B cell (primary cell): ENCODE measurements at regions of chr1 and their contacts with region 1.

Region 1: GRCh38 chr1:107897438-107898345 is 67.3 kb downstream of the VAV3 start:
- DNase-seq: peak; percentile 86
- ATAC-seq: peak; percentile 81
- H3K4me3 ChIP-seq: peak overlapping the region in 3 of 5 experiments; percentile 12 to 16 (median 13)
- H3K4me3 Mint-ChIP-seq: peak overlapping the region; percentile 56
- H3K27ac ChIP-seq: peak overlapping the region; percentile 82 to 93
- H3K27ac Mint-ChIP-seq: peak overlapping the region; percentile 94
- H3K4me1 ChIP-seq: peaks cover 83 to 87% of the 10 kb centered on the region in 2 donors
- H3K4me1 Mint-ChIP-seq: peaks cover 79% of the 10 kb centered on the region
- H3K27me3 ChIP-seq: no peaks in the 10 kb centered on the region
- H3K27me3 Mint-ChIP-seq: no peaks in the 10 kb centered on the region
- CTCF ChIP-seq: no peak

Region 2: GRCh38 chr1:107795994-107796393 is 101.7 kb before region 1 on chr1:
- CTCF ChIA-PET with region 1: no interaction called
- POLR2A ChIA-PET with region 1: no interaction called
- intact Hi-C with region 1: loop called (anchors 2 kb)
- DNase-seq: peak; percentile 40
- ATAC-seq: peak; percentile 40
- H3K4me3 ChIP-seq: peak overlapping the region in 1 of 5 experiments; percentile 18
- H3K4me3 Mint-ChIP-seq: peak overlapping the region; percentile 62
- H3K27ac ChIP-seq: peak overlapping the region; percentile 61 to 88
- H3K27ac Mint-ChIP-seq: peak overlapping the region; percentile 42
- H3K4me1 ChIP-seq: peaks cover 68 to 84% of the 10 kb centered on the region in 2 donors
- H3K4me1 Mint-ChIP-seq: peaks cover 76% of the 10 kb centered on the region
- H3K27me3 ChIP-seq: no peaks in the 10 kb centered on the region
- H3K27me3 Mint-ChIP-seq: no peaks in the 10 kb centered on the region
- CTCF ChIP-seq: no peak

Region 3: GRCh38 chr1:107870696-107871095 is 27.0 kb before region 1 on chr1:
- CTCF ChIA-PET with region 1: no interaction called
- POLR2A ChIA-PET with region 1: interaction called, 4 read pairs
- intact Hi-C with region 1: loop called (anchors 5 kb)
- DNase-seq: no peak
- ATAC-seq: no peak
- H3K4me3 ChIP-seq: no peak overlapping the region
- H3K4me3 Mint-ChIP-seq: peak overlapping the region; percentile 10
- H3K27ac ChIP-seq: peak overlapping the region; percentile 23 to 86
- H3K27ac Mint-ChIP-seq: peak overlapping the region; percentile 61
- H3K4me1 ChIP-seq: peaks cover 61 to 74% of the 10 kb centered on the region in 2 donors
- H3K4me1 Mint-ChIP-seq: peaks cover 90% of the 10 kb centered on the region
- H3K27me3 ChIP-seq: no peaks in the 10 kb centered on the region
- H3K27me3 Mint-ChIP-seq: no peaks in the 10 kb centered on the region
- CTCF ChIP-seq: no peak

Region 4: GRCh38 chr1:107912656-107913055 is 15.0 kb after region 1 on chr1:
- CTCF ChIA-PET with region 1: interaction called, 3 read pairs
- POLR2A ChIA-PET with region 1: no interaction called
- intact Hi-C with region 1: loop called (anchors 2 kb)
- DNase-seq: no peak
- ATAC-seq: no peak
- H3K4me3 ChIP-seq: no peak overlapping the region
- H3K4me3 Mint-ChIP-seq: no peak overlapping the region
- H3K27ac ChIP-seq: peak overlapping the region in 1 of 2 donors; percentile 34
- H3K27ac Mint-ChIP-seq: no peak overlapping the region
- H3K4me1 ChIP-seq: peaks cover 8 to 40% of the 10 kb centered on the region in 2 donors
- H3K4me1 Mint-ChIP-seq: peaks cover 67% of the 10 kb centered on the region
- H3K27me3 ChIP-seq: no peaks in the 10 kb centered on the region
- H3K27me3 Mint-ChIP-seq: no peaks in the 10 kb centered on the region
- CTCF ChIP-seq: no peak

Region 5: GRCh38 chr1:108000620-108001111 is 103.0 kb after region 1 on chr1:
- CTCF ChIA-PET with region 1: no interaction called
- POLR2A ChIA-PET with region 1: no interaction called
- intact Hi-C with region 1: no loop called
- DNase-seq: no peak
- ATAC-seq: no peak
- H3K4me3 ChIP-seq: no peak overlapping the region
- H3K4me3 Mint-ChIP-seq: no peak overlapping the region
- H3K27ac ChIP-seq: no peak overlapping the region
- H3K27ac Mint-ChIP-seq: no peak overlapping the region
- H3K4me1 ChIP-seq: no peaks in the 10 kb centered on the region
- H3K4me1 Mint-ChIP-seq: no peaks in the 10 kb centered on the region
- H3K27me3 ChIP-seq: no peaks in the 10 kb centered on the region
- H3K27me3 Mint-ChIP-seq: no peaks in the 10 kb centered on the region
- CTCF ChIP-seq: no peak

Region 6: GRCh38 chr1:108049178-108049819 is 151.6 kb after region 1 on chr1:
- CTCF ChIA-PET with region 1: no interaction called
- POLR2A ChIA-PET with region 1: no interaction called
- intact Hi-C with region 1: loop called (anchors 10 kb)
- DNase-seq: peak; percentile 52
- ATAC-seq: peak; percentile 60
- H3K4me3 ChIP-seq: no peak overlapping the region
- H3K4me3 Mint-ChIP-seq: no peak overlapping the region
- H3K27ac ChIP-seq: no peak overlapping the region
- H3K27ac Mint-ChIP-seq: no peak overlapping the region
- H3K4me1 ChIP-seq: peaks cover 27 to 35% of the 10 kb centered on the region in 2 donors
- H3K4me1 Mint-ChIP-seq: peaks cover 28% of the 10 kb centered on the region
- H3K27me3 ChIP-seq: no peaks in the 10 kb centered on the region
- H3K27me3 Mint-ChIP-seq: no peaks in the 10 kb centered on the region
- CTCF ChIP-seq: peak; percentile 72

Region 7: DNA sequence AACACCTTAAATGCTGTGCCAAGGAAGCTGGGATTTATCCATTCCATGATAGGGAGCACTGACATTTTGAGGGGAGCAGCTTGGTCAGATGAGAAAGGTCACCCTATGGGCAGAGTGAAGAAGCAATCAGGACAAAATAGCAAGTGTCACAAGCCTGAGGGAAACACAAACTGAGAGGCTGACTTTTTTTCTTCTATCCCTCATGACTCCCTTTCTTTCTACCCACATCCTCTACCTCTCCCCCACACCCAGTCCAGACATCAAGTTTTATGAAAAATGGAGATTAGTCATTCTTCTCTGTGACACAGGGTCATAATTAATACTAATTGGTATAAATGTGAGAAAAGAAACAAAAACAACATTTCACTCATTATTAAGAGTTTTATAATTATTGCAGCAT is 199.3 kb after region 1 on chr1:
- CTCF ChIA-PET with region 1: no interaction called
- POLR2A ChIA-PET with region 1: no interaction called
- intact Hi-C with region 1: no loop called
- DNase-seq: no peak
- ATAC-seq: no peak
- H3K4me3 ChIP-seq: no peak overlapping the region
- H3K4me3 Mint-ChIP-seq: no peak overlapping the region
- H3K27ac ChIP-seq: no peak overlapping the region
- H3K27ac Mint-ChIP-seq: no peak overlapping the region
- H3K4me1 ChIP-seq: no peaks in the 10 kb centered on the region
- H3K4me1 Mint-ChIP-seq: no peaks in the 10 kb centered on the region
- H3K27me3 ChIP-seq: no peaks in the 10 kb centered on the region
- H3K27me3 Mint-ChIP-seq: peaks cover 3% of the 10 kb centered on the region
- CTCF ChIP-seq: no peak